OCI-LY7 (cell line): ENCODE measurements at regions of chr16 and their contacts with region 1.

Region 1: GRCh38 chr16:69565671-69566239 is at the start of gene NFAT5:
- DNase-seq: peak; percentile 88
- H3K4me3 ChIP-seq: peak within 1 kb of the TSS; percentile 98
- H3K27ac ChIP-seq: peak within 1 kb of the TSS; percentile 80
- H3K4me1 ChIP-seq: peaks cover 41% of the 10 kb centered on the region
- CTCF ChIP-seq: no peak
- total RNA-seq, gene NFAT5: 6.7 and 9.9 TPM in 2 replicates

Region 2: DNA sequence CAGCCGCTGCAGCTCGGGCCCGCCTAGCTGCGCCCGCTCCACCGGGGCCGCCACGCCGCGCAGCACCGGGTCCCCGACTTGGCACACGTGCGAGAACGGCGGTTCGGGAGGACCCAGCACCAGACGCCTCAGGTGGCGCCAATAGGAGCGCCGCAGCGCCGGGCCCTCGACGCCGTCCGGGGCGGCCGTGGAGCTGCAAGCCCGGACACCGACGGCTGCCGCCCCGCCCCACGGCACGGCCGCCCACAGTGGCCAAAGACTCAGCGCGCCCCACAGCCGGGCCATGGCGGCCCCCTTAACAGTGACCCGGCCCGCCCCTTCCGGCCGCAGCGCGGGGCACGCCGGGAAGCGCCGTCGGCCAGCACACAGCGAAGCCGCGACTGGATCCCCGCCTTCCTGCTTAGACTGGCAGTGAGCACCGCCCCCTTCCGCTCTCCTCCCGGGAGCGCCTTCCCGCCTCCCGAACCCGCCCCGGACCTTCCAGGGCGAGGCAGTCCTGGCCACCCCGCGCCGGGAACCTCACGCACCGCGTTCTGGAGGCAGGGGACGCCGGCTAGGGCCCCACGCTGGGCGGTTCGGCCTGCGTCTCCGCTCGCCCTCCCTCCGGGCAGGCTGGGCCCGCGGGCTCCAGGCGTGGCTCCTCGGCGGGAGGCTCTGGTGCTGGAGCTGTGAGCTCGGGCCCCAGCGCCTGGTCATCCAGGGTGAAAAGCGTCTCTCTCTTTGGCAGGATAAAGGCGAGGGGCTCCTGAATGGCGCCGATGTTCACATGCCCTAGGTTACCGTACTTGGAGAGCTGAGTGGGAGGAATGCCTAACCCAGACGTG is 235.3 kb before region 1 on chr16 and contains the start of gene PDF:
- CTCF ChIA-PET with region 1: no interaction called
- POLR2A ChIA-PET with region 1: no interaction called
- intact Hi-C with region 1: loop called (anchors 2 kb)
- DNase-seq: peak; percentile 90
- H3K4me3 ChIP-seq: peak within 1 kb of the TSS; percentile 75
- H3K27ac ChIP-seq: peak within 1 kb of the TSS; percentile 70
- H3K4me1 ChIP-seq: peaks cover 48% of the 10 kb centered on the region
- CTCF ChIP-seq: no peak
- total RNA-seq, gene PDF: 54.8 and 85.4 TPM in 2 replicates

Region 3: DNA sequence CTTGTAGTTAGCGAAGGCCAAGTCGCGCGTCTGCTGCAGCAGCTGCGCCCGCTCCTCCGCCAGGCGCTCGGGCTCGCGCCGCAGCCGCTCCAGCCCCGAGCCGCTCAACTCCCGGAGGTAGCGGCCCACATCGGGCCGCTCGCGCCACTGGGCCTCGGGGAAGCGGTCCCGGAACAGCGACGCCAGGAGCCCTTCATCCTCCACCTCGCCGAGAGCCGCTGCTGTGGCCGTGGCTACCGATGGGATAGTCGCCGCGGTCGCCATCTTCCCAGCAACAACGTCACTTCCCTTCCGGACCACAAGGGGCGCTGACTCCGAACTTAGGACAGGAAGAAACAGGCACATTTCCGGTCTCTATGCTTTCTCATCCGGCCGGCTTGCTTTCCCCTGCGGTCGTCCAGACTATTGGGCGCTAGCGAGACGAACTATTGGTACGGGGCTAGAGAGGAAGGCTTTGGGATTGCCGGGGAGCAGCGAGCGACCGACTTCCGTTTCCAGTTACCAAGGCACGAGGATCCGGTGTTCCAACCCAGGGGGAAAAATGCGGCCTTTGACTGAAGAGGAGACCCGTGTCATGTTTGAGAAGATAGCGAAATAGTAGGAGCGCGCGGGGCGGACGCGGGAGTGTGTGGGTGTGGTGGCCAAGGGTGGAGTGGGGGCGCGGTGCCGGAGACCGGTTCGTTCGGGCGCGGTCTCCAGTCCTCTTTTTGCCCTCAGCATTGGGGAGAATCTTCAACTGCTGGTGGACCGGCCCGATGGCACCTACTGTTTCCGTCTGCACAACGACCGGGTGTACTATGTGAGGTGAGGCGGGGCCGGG is 226.3 kb before region 1 on chr16 and contains the starts of genes COG8 and NIP7:
- CTCF ChIA-PET with region 1: no interaction called
- POLR2A ChIA-PET with region 1: interaction called, 3 read pairs
- intact Hi-C with region 1: loop called (anchors 2 kb)
- DNase-seq: peak; percentile 98
- H3K4me3 ChIP-seq: peak within 1 kb of the TSS; percentile 94
- H3K27ac ChIP-seq: peak within 1 kb of the TSS; percentile 77
- H3K4me1 ChIP-seq: peaks cover 32% of the 10 kb centered on the region
- CTCF ChIP-seq: peak; percentile 74
- total RNA-seq, gene COG8: 39.0 and 60.3 TPM in 2 replicates
- total RNA-seq, gene NIP7: 26.9 and 39.7 TPM in 2 replicates

Region 4: GRCh38 chr16:69396187-69397061 is 169.3 kb before region 1 on chr16:
- CTCF ChIA-PET with region 1: no interaction called
- POLR2A ChIA-PET with region 1: no interaction called
- intact Hi-C with region 1: loop called (anchors 1 kb)
- DNase-seq: peak; percentile 85
- H3K4me3 ChIP-seq: no peak overlapping the region
- H3K27ac ChIP-seq: no peak overlapping the region
- H3K4me1 ChIP-seq: peaks cover 11% of the 10 kb centered on the region
- CTCF ChIP-seq: peak; percentile 94

Region 5: GRCh38 chr16:69424053-69424934 is 141.5 kb before region 1 on chr16 and contains the start of gene CYB5B:
- CTCF ChIA-PET with region 1: no interaction called
- POLR2A ChIA-PET with region 1: interaction called, 6 read pairs
- intact Hi-C with region 1: loop called (anchors 10 kb)
- DNase-seq: peak; percentile 99
- H3K4me3 ChIP-seq: peak within 1 kb of the TSS; percentile 84
- H3K27ac ChIP-seq: peak within 1 kb of the TSS; percentile 73
- H3K4me1 ChIP-seq: peaks cover 12% of the 10 kb centered on the region
- CTCF ChIP-seq: no peak
- total RNA-seq, gene CYB5B: 64.9 and 83.0 TPM in 2 replicates

Region 6: GRCh38 chr16:69595127-69596036 is 29.6 kb after region 1 on chr16:
- CTCF ChIA-PET with region 1: interaction called, 3 read pairs
- POLR2A ChIA-PET with region 1: interaction called, 10 read pairs
- intact Hi-C with region 1: no loop called
- DNase-seq: no peak
- H3K4me3 ChIP-seq: no peak overlapping the region
- H3K27ac ChIP-seq: no peak overlapping the region
- H3K4me1 ChIP-seq: no peaks in the 10 kb centered on the region
- CTCF ChIP-seq: no peak

Region 7: GRCh38 chr16:70523076-70523742 is 957.5 kb after region 1 on chr16 and contains the start of gene COG4:
- CTCF ChIA-PET with region 1: no interaction called
- POLR2A ChIA-PET with region 1: no interaction called
- intact Hi-C with region 1: loop called (anchors 10 kb)
- DNase-seq: peak; percentile 95
- H3K4me3 ChIP-seq: peak within 1 kb of the TSS; percentile 99
- H3K27ac ChIP-seq: peak within 1 kb of the TSS; percentile 88
- H3K4me1 ChIP-seq: peaks cover 47% of the 10 kb centered on the region
- CTCF ChIP-seq: no peak
- total RNA-seq, gene COG4: 41.9 and 48.8 TPM in 2 replicates